HEK293 (cell line): ENCODE measurements at regions of chr10 and their contacts with region 1.

Region 1: GRCh38 chr10:73879296-73880173 is 5.2 kb upstream of the CAMK2G start:
- H3K4me3 ChIP-seq: no peak overlapping the region
- H3K27ac ChIP-seq: no peak overlapping the region
- H3K4me1 ChIP-seq: no peaks in the 10 kb centered on the region
- CTCF ChIP-seq: peak; percentile 96

Region 2: GRCh38 chr10:72709041-72709440 is 1170.5 kb before region 1 on chr10:
- CTCF ChIA-PET with region 1: no interaction called
- POLR2A ChIA-PET with region 1: no interaction called
- H3K4me3 ChIP-seq: no peak overlapping the region
- H3K27ac ChIP-seq: no peak overlapping the region
- H3K4me1 ChIP-seq: peaks cover 23% of the 10 kb centered on the region
- CTCF ChIP-seq: no peak

Region 3: DNA sequence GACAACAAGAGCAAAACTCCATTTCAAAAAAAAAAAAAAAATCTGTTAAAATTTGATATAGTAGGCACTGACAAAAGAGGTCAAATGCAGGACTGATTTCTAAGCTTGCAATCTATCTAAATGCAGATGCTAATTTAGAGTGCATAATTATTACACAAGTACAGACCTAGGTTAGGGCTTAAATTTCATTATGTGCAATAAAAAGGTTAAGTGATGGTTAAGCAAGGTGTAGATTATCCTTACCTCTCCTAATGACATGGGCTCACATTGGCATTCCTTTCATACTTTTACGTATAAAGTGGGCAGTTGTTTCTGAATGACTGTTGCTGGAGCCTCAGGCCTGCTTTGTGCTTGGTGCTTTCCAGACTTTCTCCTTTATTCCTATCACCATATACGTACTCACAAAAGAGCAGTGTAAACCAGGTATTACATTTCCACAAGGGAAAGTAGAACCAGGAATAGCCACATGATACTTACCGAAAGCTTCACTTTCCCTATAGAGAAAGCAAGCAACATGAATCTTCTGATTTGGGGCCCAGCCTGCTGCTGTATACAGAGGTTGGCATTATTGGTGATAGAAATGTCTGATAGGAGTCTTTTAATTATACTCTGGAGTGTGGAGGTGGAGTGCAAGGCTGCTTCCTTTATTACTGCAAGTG is 99.9 kb before region 1 on chr10:
- CTCF ChIA-PET with region 1: interaction called, 13 read pairs
- POLR2A ChIA-PET with region 1: interaction called, 3 read pairs
- H3K4me3 ChIP-seq: no peak overlapping the region
- H3K27ac ChIP-seq: no peak overlapping the region; the same call in 1 of the 2 replicates
- H3K4me1 ChIP-seq: peaks cover 8% of the 10 kb centered on the region; the same call in 1 of the 2 replicates
- CTCF ChIP-seq: no peak

Region 4: GRCh38 chr10:73848821-73849489 is 30.6 kb before region 1 on chr10:
- CTCF ChIA-PET with region 1: interaction called, 267 read pairs
- POLR2A ChIA-PET with region 1: interaction called, 9 read pairs
- H3K4me3 ChIP-seq: no peak overlapping the region
- H3K27ac ChIP-seq: no peak overlapping the region
- H3K4me1 ChIP-seq: no peaks in the 10 kb centered on the region
- CTCF ChIP-seq: peak; percentile 94

Region 5: DNA sequence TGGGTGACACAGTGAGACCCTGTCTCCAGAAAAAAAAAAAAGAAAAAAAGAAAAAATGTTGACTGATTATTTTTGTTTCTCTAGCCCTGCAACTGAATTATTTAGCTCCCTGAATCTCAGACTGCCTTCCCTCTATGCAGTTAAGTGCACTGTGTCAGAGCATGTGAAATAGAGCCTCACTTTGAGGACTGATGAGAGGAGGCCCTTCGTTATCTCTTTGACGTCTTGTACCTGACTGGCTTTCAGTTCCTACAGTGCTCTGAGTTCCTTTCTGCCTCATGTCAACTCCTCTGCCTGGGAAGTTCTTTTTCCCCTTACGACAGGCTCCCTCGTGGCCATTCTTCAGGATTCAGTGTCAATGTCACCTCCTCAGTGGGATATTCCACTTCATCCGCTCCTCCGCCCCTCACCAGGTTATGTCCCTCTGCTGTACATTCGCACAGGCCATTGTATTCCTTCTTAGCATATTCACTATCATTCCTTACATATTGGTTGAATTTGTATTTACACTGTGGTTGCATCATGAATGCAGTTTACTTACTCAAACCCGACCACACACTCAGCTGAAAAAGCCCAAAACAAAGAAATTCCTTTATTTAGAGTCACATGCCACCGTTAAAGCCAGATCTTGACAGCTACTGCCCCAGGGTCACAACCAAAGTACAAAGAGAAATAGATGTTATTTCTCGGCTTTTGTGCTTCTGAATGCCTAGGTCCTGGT is 12.9 kb after region 1 on chr10:
- CTCF ChIA-PET with region 1: interaction called, 19 read pairs
- POLR2A ChIA-PET with region 1: interaction called, 3 read pairs
- H3K4me3 ChIP-seq: no peak overlapping the region
- H3K27ac ChIP-seq: no peak overlapping the region
- H3K4me1 ChIP-seq: peaks cover 2% of the 10 kb centered on the region; the same call in 1 of the 2 replicates
- CTCF ChIP-seq: no peak

Region 6: GRCh38 chr10:73908853-73909538 is 29.5 kb after region 1 on chr10:
- CTCF ChIA-PET with region 1: interaction called, 15 read pairs
- POLR2A ChIA-PET with region 1: no interaction called
- H3K4me3 ChIP-seq: no peak overlapping the region
- H3K27ac ChIP-seq: no peak overlapping the region
- H3K4me1 ChIP-seq: no peaks in the 10 kb centered on the region
- CTCF ChIP-seq: no peak

Region 7: GRCh38 chr10:74081192-74081803 is 201.8 kb after region 1 on chr10:
- CTCF ChIA-PET with region 1: interaction called, 79 read pairs
- POLR2A ChIA-PET with region 1: no interaction called
- H3K4me3 ChIP-seq: no peak overlapping the region
- H3K27ac ChIP-seq: no peak overlapping the region
- H3K4me1 ChIP-seq: peaks cover 10% of the 10 kb centered on the region
- CTCF ChIP-seq: peak; percentile 62; the same call in 1 of the 2 replicates